Naive thymus-derived CD4-positive, alpha-beta T cell (primary cell): ENCODE measurements at regions of chr1 and their contacts with region 1.

Region 1: DNA sequence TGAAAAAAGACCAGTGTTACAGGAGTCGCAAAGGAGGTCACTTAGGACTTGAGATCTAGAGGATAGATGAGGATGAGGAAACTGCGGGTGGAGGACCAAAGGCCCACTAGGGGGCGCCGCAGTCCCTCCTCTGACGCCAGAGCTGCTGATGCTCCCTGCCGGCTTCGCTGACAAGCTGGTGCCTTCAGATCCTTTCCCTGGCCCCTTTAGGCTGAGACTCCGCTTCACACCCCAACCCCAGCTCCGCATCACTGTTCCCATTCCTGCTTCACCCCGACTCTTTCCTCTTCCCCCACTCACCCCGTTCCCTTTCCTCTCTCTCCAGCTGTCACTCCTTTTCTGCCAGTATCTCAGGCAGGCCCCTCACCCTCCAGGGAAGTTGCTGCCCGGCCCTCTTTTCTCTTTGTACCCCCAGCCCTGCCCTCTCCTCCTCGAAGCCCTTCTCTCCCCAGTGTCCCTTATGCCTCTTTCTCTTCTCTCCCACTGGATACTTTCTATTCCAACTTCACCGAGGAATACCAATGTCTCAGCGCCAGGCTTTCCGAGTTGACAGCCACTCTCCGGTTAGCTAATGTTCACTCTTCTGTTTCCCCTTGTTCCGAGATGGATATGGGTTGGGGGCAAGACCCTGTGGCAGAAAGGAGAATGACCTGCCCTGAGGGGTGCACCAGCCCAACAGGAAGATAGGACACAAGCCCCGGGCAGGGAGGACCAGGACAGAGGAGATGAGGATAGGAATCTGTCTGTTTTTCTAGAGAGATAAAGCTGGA is 4.5 kb downstream of the KCNJ9 start:
- DNase-seq: peak; percentile 55 to 81 (median 72)
- ATAC-seq: peak; percentile 81
- H3K4me3 ChIP-seq: no peak overlapping the region
- H3K4me3 Mint-ChIP-seq: peak overlapping the region in 6 of 10 donors; percentile 9 to 47 (median 34)
- H3K27ac ChIP-seq: no peak overlapping the region
- H3K27ac Mint-ChIP-seq: peak overlapping the region in 7 of 9 donors; percentile 46 to 80 (median 76)
- H3K4me1 ChIP-seq: peaks cover 0 to 7% of the 10 kb centered on the region in 2 donors
- H3K4me1 Mint-ChIP-seq: peaks cover 10 to 24% (median 20%) of the 10 kb centered on the region in 7 donors
- H3K27me3 ChIP-seq: peaks cover 8 to 9% of the 10 kb centered on the region in 2 donors
- H3K27me3 Mint-ChIP-seq: peaks cover 18 to 27% (median 19%) of the 10 kb centered on the region in 5 donors

Region 2: DNA sequence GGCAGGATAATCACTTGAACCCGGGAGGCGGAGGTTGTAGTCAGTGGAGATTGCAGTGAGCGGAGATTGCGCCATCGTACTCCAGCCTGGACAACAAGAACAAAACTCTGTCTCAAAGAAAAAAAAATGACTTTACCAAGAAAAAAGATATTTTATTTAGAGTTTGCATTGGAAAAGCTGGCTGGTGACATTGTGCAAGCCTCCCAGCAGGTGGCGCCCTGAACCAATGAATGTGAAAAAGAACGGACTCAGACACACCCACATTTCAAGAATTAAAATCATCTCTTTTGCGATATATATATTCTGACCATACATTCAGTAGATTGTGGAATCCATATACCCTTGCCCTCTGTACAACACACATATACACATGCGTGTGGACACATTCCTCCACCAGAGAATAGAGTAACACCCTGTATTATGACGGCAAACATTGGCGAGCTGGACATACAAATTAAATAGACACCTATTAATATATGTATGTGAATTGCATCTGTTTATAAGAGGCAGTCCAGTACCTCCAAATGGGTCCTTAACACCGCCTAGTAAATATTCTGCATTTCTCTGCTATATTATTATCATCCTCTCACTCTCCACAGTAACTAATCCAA is 953.5 kb before region 1 on chr1:
- CTCF ChIA-PET with region 1: no interaction called
- POLR2A ChIA-PET with region 1: no interaction called
- intact Hi-C with region 1: loop called in 1 of 2 experiments (anchors 10 kb)
- DNase-seq: peak in 8 of 9 donors; percentile 19 to 68 (median 45)
- ATAC-seq: peak; percentile 67
- H3K4me3 ChIP-seq: no peak overlapping the region
- H3K4me3 Mint-ChIP-seq: no peak overlapping the region
- H3K27ac ChIP-seq: no peak overlapping the region
- H3K27ac Mint-ChIP-seq: no peak overlapping the region
- H3K4me1 ChIP-seq: no peaks in the 10 kb centered on the region
- H3K4me1 Mint-ChIP-seq: no peaks in the 10 kb centered on the region
- H3K27me3 ChIP-seq: no peaks in the 10 kb centered on the region
- H3K27me3 Mint-ChIP-seq: peaks cover 0 to 13% (median 9%) of the 10 kb centered on the region in 5 donors

Region 3: DNA sequence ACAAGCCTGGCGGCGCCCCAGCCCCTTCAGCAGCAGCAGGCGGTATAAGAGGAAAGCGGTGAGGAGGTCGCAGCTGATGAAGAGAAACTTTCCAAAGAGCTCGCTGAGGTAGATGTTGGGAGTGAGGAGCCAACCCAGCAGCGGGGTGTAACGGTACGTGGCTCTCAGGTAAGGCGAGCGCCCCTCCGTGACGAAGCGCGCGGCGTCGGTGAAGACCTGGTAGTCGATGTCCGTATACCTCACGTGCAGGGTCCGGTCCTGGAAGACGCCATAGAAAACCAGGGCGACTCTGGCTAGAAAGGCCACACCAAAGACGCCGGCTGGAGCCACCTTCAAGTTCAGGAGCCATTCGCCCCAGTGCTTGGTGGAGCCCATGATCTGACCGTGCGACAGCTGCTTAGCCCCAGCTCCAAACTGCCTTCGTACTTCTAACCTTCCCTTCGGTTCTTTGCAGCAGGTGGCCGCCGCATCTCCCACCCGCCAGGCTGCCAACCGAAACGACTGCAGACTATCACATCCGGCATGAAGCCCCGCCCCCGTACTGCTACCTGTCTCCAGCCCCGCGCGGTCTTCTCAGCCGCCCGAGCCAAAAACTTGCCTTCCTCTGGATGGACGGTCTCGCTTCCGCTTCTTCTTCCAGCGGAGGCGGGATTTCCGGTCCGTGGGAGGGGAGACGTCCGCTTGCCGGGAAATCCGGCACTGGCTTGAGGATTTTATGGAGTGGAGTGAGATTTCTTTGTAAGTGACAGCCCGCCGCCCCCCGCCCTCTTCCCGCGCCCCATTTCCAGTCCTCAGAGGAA is 54.3 kb before region 1 on chr1 and contains the start of gene PIGM:
- CTCF ChIA-PET with region 1: interaction called, 6 read pairs
- POLR2A ChIA-PET with region 1: interaction called, 5 read pairs
- intact Hi-C with region 1: loop called in 1 of 2 experiments (anchors 5 kb)
- DNase-seq: peak; percentile 73 to 91 (median 90)
- ATAC-seq: peak; percentile 98
- H3K4me3 ChIP-seq: peak within 1 kb of the TSS; percentile 68
- H3K4me3 Mint-ChIP-seq: peak within 1 kb of the TSS; percentile 90 to 100 (median 98)
- H3K27ac ChIP-seq: peak within 1 kb of the TSS; percentile 69
- H3K27ac Mint-ChIP-seq: peak within 1 kb of the TSS; percentile 69 to 96 (median 89)
- H3K4me1 ChIP-seq: peaks cover 12 to 14% of the 10 kb centered on the region in 2 donors
- H3K4me1 Mint-ChIP-seq: peaks cover 30 to 56% (median 45%) of the 10 kb centered on the region in 7 donors
- H3K27me3 ChIP-seq: no peaks in the 10 kb centered on the region
- H3K27me3 Mint-ChIP-seq: peaks cover 0 to 18% (median 0%) of the 10 kb centered on the region in 5 donors
- total RNA-seq, gene PIGM: 4.0 to 11.4 (median 7.0) TPM

Region 4: GRCh38 chr1:160070243-160071163 is 15.4 kb before region 1 on chr1:
- CTCF ChIA-PET with region 1: interaction called, 12 read pairs
- POLR2A ChIA-PET with region 1: interaction called, 3 read pairs
- intact Hi-C with region 1: loop called in 1 of 2 experiments (anchors 1 kb)
- DNase-seq: peak; percentile 47 to 81 (median 69)
- ATAC-seq: peak; percentile 96
- H3K4me3 ChIP-seq: peak overlapping the region; percentile 85
- H3K4me3 Mint-ChIP-seq: peak overlapping the region; percentile 88 to 100 (median 92)
- H3K27ac ChIP-seq: peak overlapping the region; percentile 51
- H3K27ac Mint-ChIP-seq: peak overlapping the region in 7 of 9 donors; percentile 18 to 78 (median 62)
- H3K4me1 ChIP-seq: peaks cover 3 to 8% of the 10 kb centered on the region in 2 donors
- H3K4me1 Mint-ChIP-seq: peaks cover 9 to 26% (median 16%) of the 10 kb centered on the region in 7 donors
- H3K27me3 ChIP-seq: peaks cover 0 to 6% of the 10 kb centered on the region in 2 donors
- H3K27me3 Mint-ChIP-seq: peaks cover 18 to 60% (median 37%) of the 10 kb centered on the region in 5 donors

Region 5: GRCh38 chr1:160291248-160292220 is 205.7 kb after region 1 on chr1:
- CTCF ChIA-PET with region 1: interaction called, 11 read pairs
- POLR2A ChIA-PET with region 1: interaction called, 3 read pairs
- intact Hi-C with region 1: loop called in 1 of 2 experiments (anchors 1 kb)
- DNase-seq: peak; percentile 24 to 82 (median 74)
- ATAC-seq: peak; percentile 98
- H3K4me3 ChIP-seq: no peak overlapping the region
- H3K4me3 Mint-ChIP-seq: no peak overlapping the region
- H3K27ac ChIP-seq: no peak overlapping the region
- H3K27ac Mint-ChIP-seq: peak overlapping the region; percentile 0 to 88 (median 40)
- H3K4me1 ChIP-seq: peaks cover 0 to 3% of the 10 kb centered on the region in 2 donors
- H3K4me1 Mint-ChIP-seq: peaks cover 2 to 7% (median 6%) of the 10 kb centered on the region in 7 donors
- H3K27me3 ChIP-seq: no peaks in the 10 kb centered on the region
- H3K27me3 Mint-ChIP-seq: no peaks in the 10 kb centered on the region